Sigmoid colon (tissue), 7 donors: ENCODE measurements at regions of chr17 and their contacts with region 1.

Region 1: DNA sequence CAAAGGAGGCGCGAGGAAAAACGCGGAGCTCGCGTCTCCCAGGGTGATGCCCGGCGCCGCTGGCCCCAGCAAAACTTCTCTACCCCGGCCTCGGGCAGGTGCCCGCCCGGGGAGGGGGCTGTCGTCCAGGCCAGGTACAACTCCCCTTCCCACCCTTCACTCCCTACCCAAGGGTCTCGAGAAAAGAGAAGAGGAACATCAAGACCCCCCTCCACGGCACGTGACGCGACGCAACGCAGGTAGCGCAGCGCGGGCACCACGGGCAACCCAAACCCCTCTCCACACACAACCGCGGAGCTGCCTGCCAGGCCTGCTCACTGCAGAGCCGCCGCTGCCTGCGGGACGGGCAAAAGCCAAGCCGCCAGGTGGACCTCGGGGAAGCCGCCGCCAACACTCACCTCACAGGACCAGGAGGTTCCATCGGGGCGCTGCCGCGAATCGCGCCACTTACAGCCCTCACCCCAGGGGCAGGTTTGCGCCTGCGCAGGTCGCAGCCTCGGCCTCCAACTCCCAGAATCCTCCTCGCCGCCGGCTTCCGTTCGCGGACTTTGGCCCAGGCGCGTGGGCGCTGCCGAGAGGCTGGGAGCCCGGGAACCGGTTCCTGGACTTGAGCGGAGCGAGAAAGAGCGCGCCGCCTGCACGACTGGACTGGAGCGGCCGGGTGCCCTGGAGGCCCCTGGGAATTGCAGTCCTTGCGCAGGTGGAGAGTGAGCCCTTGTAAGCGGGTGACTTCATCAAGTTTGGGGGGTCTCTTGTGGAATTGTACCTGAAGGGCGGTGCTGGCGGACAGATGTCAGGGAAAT is at the start of gene ZNF232:
- DNase-seq: peak; percentile 96
- H3K4me3 ChIP-seq: peak within 1 kb of the TSS; percentile 76 to 95 (median 81)
- H3K27ac ChIP-seq: peak within 1 kb of the TSS; percentile 81 to 85 (median 82)
- H3K4me1 ChIP-seq: peaks cover 0 to 21% (median 13%) of the 10 kb centered on the region in 4 donors
- H3K27me3 ChIP-seq: peaks cover 6 to 27% (median 8%) of the 10 kb centered on the region in 3 donors
- CTCF ChIP-seq: no peak
- EP300 ChIP-seq: no peak
- POLR2A ChIP-seq: peak; percentile 32 to 42
- total RNA-seq, gene ZNF232: 5.7 to 15.3 (median 12.7) TPM

Region 2: GRCh38 chr17:5191541-5192417 is 80.2 kb after region 1 on chr17 and contains the start of gene ZNF594:
- intact Hi-C with region 1: loop called (anchors 5 kb)
- DNase-seq: peak; percentile 98
- H3K4me3 ChIP-seq: peak within 1 kb of the TSS; percentile 80 to 92 (median 86)
- H3K27ac ChIP-seq: peak within 1 kb of the TSS; percentile 78 to 87 (median 83)
- H3K4me1 ChIP-seq: peaks cover 0 to 23% (median 16%) of the 10 kb centered on the region in 4 donors
- H3K27me3 ChIP-seq: no peaks in the 10 kb centered on the region
- CTCF ChIP-seq: peak; percentile 52 to 61 (median 58)
- EP300 ChIP-seq: peak in 1 of 4 donors; percentile 5
- POLR2A ChIP-seq: peak; percentile 36 to 57
- total RNA-seq, gene ZNF594: 15.5 to 24.3 (median 16.9) TPM